ENCODE measurements at regions of chr3 and their contacts with region 1.

Region 1: DNA sequence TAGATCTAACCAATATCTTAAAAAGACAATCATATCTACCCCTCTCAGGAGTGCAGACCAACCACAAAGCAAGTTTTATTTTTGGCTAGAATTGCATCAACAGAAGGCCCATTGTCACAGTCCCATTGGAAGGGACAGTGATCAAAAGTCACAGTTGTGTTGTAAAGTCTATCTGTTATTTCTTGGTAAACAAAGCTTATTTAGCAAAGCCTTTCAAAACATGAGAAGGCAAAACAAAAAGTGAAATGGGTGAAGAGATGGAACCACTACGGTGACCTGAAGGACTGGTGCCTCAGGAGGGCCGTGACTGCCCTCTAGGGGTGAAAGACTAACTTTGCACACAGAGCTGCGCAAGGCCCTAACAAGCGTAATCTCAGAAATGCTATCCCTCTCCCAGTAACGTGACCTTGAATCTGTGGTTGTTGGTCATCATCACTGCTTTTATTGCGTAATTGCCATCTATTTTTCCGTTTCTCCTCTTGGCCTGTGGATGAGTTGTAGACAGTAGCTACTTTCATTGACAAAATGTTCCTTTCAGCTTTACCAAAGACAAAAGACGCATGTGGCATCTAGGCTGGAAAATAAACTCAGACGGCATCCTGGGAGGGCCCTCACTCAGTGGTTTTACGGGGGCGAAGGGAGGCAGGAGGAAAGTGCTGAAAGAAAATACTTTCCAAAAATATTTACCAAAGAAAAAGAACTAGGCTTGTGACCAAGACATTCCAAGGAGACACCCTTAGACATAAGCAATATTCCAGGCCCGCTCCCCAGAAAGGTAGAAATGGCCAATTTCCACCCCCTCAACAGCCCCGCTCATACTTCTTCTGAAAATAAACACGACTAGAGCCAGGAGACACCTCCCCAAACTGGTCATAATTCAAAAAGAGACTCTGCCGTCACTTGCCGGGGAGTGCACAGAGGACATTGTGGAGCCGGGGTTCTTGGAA is 79.4 kb downstream of the FRMD4B start:
- DNase-seq: peak; percentile 85

Region 2: GRCh38 chr3:69161587-69162307 is 144.8 kb before region 1 on chr3:
- intact Hi-C with region 1: loop called (anchors 1 kb)
- DNase-seq: no peak

Region 3: DNA sequence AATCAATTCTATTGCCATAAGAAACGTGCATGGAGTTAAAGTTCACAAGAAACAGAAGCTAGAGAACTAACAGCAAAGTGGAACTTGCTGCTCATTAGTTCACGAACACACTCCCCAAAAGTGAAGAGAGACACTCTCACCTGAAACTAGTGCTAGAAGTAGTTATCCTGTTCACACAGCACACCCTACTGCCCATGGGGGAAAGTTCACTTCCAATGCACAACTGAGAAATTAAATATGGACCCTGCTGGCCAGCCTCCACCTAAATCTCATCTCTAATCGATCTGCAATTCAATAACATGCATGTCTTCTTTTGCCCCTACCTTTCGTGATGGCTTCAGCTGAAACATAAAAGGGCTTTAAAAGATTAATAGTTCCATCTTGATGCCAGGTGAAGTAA is 118.7 kb after region 1 on chr3:
- intact Hi-C with region 1: loop called (anchors 5 kb)
- DNase-seq: no peak

Region 4: GRCh38 chr3:69558912-69559311 is 252.4 kb after region 1 on chr3:
- intact Hi-C with region 1: loop called (anchors 10 kb)
- DNase-seq: no peak

Region 5: DNA sequence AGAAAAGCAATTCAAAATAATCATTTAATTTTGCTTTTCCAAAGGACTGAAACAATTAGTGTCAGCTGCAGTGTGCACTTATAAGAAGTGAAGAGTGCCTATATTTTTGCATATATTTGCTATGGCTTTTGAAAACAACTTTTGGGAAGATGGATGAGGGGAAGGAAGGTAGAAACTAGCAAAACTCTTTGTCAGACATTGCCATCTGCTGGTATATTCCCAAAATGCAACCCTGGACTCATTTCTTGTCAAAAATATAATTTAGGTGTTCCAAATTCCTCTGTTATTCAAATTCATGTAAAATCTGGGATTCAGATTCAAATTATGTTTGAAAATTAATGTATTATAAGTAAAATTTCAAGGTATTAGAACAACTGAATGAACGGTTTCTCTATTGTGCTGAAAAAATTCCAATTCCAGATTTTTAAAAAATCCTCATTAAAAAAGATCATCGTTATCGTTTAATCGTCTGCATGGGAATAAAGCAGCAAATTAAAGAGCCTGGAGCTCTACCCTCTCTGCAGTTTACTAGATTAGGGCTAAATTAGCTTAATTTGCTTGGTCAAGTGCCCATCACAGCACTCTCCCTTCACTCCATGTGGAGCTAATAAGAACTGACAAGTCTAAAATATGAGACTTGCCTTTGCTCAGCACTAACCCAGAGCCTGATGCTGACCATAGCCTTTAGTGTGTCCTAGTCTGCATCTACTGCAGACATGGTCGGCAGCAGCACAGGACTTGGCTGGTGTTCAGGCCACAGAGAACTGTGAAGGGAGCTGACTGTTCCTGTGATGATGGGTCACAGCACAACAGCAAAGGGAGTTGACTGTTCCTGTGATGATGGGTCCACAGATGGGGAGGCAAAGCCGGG is 364.8 kb after region 1 on chr3:
- intact Hi-C with region 1: loop called (anchors 5 kb)
- DNase-seq: no peak

Measured in cardiac septum (tissue), 1 donor.